ENCODE measurements at regions of chr11 and their contacts with region 1.

Region 1: GRCh38 chr11:6414874-6415328 is 4.0 kb downstream of the APBB1 start:
- H3K4me3 Mint-ChIP-seq: no peak overlapping the region
- H3K27ac Mint-ChIP-seq: no peak overlapping the region
- H3K4me1 Mint-ChIP-seq: peaks cover 5% of the 10 kb centered on the region
- H3K27me3 Mint-ChIP-seq: peaks cover 8% of the 10 kb centered on the region

Region 2: DNA sequence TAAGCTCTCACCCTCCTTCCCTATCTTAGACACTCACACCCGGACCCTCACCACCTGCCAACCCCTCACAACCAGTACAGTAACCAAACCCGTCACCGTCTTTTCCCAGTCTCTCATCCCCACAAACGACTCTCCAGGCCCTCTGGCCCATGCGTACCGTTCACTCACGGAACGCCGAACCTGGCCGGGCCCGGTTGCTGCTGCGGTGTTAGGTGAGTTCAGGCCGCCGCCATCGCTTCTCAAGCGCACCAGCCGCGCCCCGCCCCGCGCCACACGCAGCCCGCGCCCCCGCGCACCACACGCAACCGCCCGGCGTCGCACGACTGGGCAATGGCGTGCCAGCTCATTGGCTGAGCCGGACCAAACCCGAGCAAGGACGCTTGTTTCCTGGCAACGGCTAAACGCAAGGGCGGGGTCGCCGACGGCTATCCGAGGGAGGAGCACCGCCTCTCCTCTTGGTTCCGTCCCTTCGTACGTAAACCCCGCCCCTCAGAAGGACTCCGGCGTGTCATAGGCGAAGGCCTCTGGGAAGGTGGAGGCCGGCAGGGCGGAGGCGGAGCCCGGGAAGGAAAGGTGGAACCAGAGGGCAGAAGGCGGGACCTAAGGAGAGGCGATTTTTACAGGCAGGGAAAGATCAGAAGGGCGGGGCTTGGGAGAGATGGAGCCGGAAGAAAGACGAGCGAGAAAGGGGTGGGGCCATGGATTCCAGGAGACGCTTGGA is 180.4 kb before region 1 on chr11 and contains the start of gene FHIP1B:
- intact Hi-C with region 1: no loop called
- H3K4me3 Mint-ChIP-seq: peak within 1 kb of the TSS; percentile 96
- H3K27ac Mint-ChIP-seq: peak within 1 kb of the TSS; percentile 95
- H3K4me1 Mint-ChIP-seq: peaks cover 57% of the 10 kb centered on the region
- H3K27me3 Mint-ChIP-seq: no peaks in the 10 kb centered on the region

Region 3: GRCh38 chr11:6389921-6390724 is 24.8 kb before region 1 on chr11 and contains the start of gene SMPD1:
- intact Hi-C with region 1: loop called (anchors 2 kb)
- H3K4me3 Mint-ChIP-seq: peak within 1 kb of the TSS; percentile 87
- H3K27ac Mint-ChIP-seq: peak within 1 kb of the TSS; percentile 94
- H3K4me1 Mint-ChIP-seq: peaks cover 34% of the 10 kb centered on the region
- H3K27me3 Mint-ChIP-seq: peaks cover 7% of the 10 kb centered on the region